HEK293 (cell line): ENCODE measurements at regions of chr19 and their contacts with region 1.

Region 1: GRCh38 chr19:33064792-33065550 is at the start of gene RHPN2:
- H3K4me3 ChIP-seq: peak within 1 kb of the TSS; percentile 45
- H3K27ac ChIP-seq: peak within 1 kb of the TSS; percentile 75; the same call in 1 of the 2 replicates
- H3K4me1 ChIP-seq: peaks cover 21% of the 10 kb centered on the region
- CTCF ChIP-seq: peak; percentile 67

Region 2: DNA sequence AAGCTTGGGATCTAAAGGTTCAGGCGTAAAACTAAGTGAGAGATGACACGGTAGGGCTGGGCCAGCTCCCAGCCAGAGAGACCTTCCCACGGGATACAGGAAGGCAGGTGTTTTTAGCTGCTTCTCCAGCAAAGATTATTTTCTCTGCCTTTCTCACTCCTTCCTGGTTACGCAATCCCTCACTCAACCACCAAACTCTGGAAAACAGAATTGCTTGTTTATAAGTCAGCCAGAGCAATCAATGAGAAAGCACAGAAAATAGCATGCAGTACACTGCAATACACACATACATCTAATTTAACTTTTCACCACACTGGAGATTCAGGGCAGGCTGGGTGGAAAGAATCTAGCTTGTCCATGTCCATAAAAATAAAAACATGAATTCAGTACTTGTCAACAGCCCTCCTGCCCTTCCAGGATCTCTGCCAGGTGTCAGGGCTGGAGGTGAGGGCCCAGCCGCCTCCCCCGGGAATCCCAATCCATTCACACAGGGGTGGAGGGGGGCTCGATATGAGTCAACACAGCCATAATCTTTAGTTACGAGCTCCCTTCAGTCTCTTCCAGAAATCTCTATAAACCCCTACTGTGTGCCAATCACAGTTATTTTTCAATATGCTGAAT is 12.5 kb before region 1 on chr19:
- CTCF ChIA-PET with region 1: interaction called, 9 read pairs
- POLR2A ChIA-PET with region 1: interaction called, 26 read pairs
- H3K4me3 ChIP-seq: no peak overlapping the region
- H3K27ac ChIP-seq: peak overlapping the region; percentile 47
- H3K4me1 ChIP-seq: peaks cover 52% of the 10 kb centered on the region
- CTCF ChIP-seq: no peak

Region 3: GRCh38 chr19:33080761-33081681 is 16.1 kb after region 1 on chr19 and contains the start of gene GPATCH1:
- CTCF ChIA-PET with region 1: interaction called, 5 read pairs
- POLR2A ChIA-PET with region 1: interaction called, 10 read pairs
- H3K4me3 ChIP-seq: peak within 1 kb of the TSS; percentile 66
- H3K27ac ChIP-seq: peak within 1 kb of the TSS; percentile 89
- H3K4me1 ChIP-seq: peaks cover 26% of the 10 kb centered on the region
- CTCF ChIP-seq: peak; percentile 82